Psoas muscle (tissue), 8 donors: ENCODE measurements at regions of chr5 and their contacts with region 1.

Region 1: DNA sequence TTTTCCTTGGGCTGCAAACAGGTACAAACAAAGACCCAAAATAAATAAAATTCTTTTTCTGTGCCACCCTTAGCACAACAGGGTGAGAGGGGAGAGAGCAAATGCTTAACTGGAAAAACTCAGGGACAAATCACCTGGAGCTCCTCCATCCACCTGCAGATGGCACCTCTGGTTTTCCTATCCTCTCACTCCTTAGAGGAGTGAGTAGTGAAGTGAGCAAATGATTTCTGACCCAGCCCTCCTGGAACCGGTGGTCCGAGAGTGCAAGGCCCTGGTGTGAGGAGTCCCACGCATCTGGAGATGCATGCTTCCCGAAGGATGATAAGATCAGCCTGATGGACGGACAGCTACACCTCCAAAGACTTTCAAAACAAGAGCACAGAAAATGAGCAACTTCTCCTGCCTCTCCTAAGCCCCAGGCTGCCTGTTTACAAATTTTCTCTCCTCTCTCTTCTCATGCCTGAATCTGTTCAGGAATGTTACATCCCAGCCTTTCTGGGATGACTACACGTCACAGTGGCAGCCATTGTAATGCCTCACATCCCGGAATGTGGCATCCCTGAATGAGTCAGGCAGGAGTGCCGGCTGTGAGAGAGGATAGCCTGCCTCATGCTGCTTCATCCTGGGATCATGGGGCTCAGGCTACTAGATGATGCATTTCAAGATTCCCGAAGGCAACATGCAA is 86.4 kb downstream of the ADRB2 start:
- DNase-seq: no peak
- ATAC-seq: peak in 3 of 4 donors; percentile 44 to 67 (median 66)
- H3K4me3 ChIP-seq: no peak overlapping the region
- H3K27ac ChIP-seq: no peak overlapping the region
- H3K4me1 ChIP-seq: peaks cover 15% of the 10 kb centered on the region
- H3K27me3 ChIP-seq: no peaks in the 10 kb centered on the region
- CTCF ChIP-seq: peak; percentile 39

Region 2: DNA sequence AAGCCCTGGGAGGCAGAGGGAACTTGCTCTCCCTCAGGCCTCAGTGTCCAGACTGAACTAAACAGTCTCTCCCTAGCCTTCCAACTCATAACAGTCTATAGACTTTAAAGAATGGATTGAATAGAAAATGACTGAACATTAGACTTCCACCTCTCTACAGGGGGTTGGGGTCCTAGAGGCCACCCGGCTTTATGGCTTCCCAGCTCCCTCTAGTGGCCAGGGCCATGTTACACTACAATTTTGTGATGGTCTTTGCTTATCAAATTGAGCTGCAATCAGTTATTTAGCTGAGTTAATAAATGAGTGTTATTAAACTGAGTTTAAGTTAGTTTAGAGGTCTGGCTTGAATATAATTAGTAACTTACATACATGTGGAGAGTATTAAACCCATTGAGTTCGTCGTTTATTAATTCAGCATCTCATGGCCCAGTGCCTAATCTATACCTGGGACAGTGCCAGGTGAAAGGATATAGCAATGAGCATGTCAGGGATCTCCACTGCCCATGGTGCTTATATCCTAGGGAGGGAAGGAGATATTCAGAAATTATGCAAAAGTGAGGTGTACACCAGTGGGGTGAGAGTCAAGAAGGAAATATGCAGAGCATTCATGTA is 44.8 kb after region 1 on chr5:
- intact Hi-C with region 1: loop called (anchors 5 kb)
- DNase-seq: no peak
- ATAC-seq: peak in 2 of 4 donors; percentile 50 to 65
- H3K4me3 ChIP-seq: no peak overlapping the region
- H3K27ac ChIP-seq: no peak overlapping the region
- H3K4me1 ChIP-seq: peaks cover 5% of the 10 kb centered on the region
- H3K27me3 ChIP-seq: no peaks in the 10 kb centered on the region
- CTCF ChIP-seq: peak; percentile 84

Region 3: GRCh38 chr5:148963664-148964063 is 50.8 kb after region 1 on chr5:
- intact Hi-C with region 1: loop called (anchors 5 kb)
- DNase-seq: no peak
- ATAC-seq: no peak
- H3K4me3 ChIP-seq: no peak overlapping the region
- H3K27ac ChIP-seq: no peak overlapping the region
- H3K4me1 ChIP-seq: peaks cover 37% of the 10 kb centered on the region
- H3K27me3 ChIP-seq: no peaks in the 10 kb centered on the region
- CTCF ChIP-seq: no peak

Region 4: DNA sequence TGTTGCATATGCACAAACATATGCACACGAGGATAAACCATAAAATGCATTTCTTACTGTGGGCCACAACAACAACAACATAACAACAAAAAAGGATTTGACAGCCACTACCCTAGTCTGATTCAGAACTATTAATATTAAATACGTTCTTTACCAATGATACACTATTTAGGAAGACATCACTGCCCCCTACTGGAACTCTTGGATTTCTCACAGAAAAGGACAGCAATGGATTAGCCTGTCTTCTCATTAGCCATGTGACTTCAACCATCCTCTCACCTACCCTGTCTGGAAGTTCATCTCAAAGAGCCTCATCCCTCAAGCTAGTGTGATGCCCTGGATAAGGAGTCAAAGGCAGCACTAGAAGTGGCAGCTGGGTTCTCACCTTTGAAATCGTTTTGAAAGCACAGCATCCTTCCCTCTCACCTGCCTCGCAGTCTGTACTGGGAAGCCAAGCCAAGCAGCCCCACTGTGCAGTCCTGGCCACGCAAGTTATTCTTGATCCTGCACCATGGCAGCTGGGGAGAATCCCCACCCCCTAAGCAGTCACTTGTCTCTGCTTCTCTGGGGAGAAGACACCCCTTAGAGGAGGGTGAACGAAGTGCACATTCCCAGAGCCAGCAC is 85.4 kb after region 1 on chr5:
- intact Hi-C with region 1: loop called in 1 of 2 experiments (anchors 2 kb)
- DNase-seq: no peak
- ATAC-seq: peak; percentile 57 to 76 (median 65)
- H3K4me3 ChIP-seq: no peak overlapping the region
- H3K27ac ChIP-seq: no peak overlapping the region
- H3K4me1 ChIP-seq: peaks cover 45% of the 10 kb centered on the region
- H3K27me3 ChIP-seq: no peaks in the 10 kb centered on the region
- CTCF ChIP-seq: peak; percentile 75